ENCODE measurements at regions of chr16 and their contacts with region 1.

Region 1: GRCh38 chr16:361872-362701 is 8.3 kb downstream of the MRPL28 start:
- DNase-seq: peak; percentile 67 to 89
- ATAC-seq: peak; percentile 89 to 98 (median 95)
- H3K4me3 ChIP-seq: no peak overlapping the region
- H3K4me3 Mint-ChIP-seq: no peak overlapping the region
- H3K27ac ChIP-seq: no peak overlapping the region
- H3K27ac Mint-ChIP-seq: no peak overlapping the region
- H3K4me1 ChIP-seq: peaks cover 10% of the 10 kb centered on the region
- H3K4me1 Mint-ChIP-seq: peaks cover 5 to 7% of the 10 kb centered on the region in 2 donors
- H3K27me3 ChIP-seq: no peaks in the 10 kb centered on the region
- H3K27me3 Mint-ChIP-seq: no peaks in the 10 kb centered on the region
- CTCF ChIP-seq: peak; percentile 70

Region 2: DNA sequence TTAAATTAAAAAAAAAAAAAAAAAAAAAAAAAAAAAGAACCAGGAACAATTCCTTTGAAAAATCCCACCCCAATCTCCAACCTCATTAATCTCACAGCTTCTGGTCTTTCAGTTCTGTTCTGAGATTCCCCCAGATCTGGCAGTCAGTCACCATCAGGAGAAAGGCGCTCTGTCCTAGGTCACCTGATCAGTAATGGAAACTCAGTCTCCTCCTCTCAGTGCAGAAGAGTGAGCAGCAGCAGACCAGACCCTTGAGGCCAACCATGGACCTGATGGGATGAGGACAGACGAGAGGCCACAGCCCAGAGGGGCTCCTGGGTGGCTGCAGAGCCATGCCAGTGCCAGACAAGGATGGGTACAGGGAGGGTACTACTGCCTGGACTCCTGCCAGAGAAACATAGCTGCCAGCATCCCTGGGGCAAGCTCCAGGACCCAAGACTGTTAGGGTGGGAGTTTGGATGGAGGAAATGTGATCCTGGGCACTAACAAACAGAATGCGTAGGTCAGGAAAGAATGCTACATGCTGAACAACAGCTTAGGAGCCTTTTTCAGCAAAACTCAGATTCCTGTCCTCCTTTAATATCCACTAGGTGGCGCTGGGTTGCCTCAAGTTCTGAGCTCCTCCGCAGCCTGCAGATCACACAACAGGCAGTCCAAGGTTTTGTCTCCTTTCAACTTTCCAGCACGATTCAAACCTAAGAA is 255.3 kb before region 1 on chr16:
- intact Hi-C with region 1: loop called (anchors 1 kb)
- DNase-seq: peak; percentile 42 to 85
- ATAC-seq: peak; percentile 81 to 94 (median 86)
- H3K4me3 ChIP-seq: no peak overlapping the region
- H3K4me3 Mint-ChIP-seq: no peak overlapping the region
- H3K27ac ChIP-seq: no peak overlapping the region
- H3K27ac Mint-ChIP-seq: no peak overlapping the region
- H3K4me1 ChIP-seq: no peaks in the 10 kb centered on the region
- H3K4me1 Mint-ChIP-seq: peaks cover 0 to 7% of the 10 kb centered on the region in 2 donors
- H3K27me3 ChIP-seq: no peaks in the 10 kb centered on the region
- H3K27me3 Mint-ChIP-seq: no peaks in the 10 kb centered on the region
- CTCF ChIP-seq: peak; percentile 72

Region 3: DNA sequence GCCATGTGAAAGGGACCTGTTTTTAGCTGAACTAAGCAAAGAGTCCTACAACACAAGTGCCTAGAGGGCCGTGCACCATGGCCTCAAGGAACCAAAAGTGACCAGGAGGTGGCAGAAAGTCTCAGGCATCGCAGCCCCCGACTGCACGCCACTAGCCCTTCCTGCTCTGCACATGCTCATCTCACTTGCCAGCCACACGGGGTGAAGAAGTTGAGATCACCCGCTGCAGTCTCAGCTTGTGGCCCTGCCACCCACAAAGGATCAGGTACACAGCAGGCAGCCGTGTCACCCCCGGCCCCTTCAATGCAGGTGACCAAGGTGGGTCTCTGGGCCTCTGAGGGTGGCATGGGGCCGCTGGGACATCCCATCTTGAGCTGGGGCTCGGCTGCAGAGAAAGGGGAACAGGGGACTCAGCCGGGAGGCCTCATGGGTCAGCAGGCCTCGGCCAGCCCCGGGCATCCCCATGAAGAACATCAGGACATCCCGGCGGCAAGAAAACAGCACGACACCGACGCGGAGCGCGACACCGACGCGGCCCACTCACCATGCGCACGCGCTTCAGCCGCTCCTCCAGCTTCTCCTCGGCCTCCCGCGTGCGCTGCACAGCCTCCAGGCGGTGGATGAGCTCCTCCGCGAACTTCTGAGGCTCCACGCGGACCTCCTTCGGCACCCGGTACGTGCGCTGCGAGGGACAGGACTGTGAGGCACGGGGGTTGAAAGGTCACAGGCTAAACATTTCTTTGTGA is 58.2 kb before region 1 on chr16:
- intact Hi-C with region 1: loop called (anchors 1 kb)
- DNase-seq: peak in 1 of 2 donors; percentile 50
- ATAC-seq: peak in 2 of 3 donors; percentile 42 to 48
- H3K4me3 ChIP-seq: no peak overlapping the region
- H3K4me3 Mint-ChIP-seq: no peak overlapping the region
- H3K27ac ChIP-seq: no peak overlapping the region
- H3K27ac Mint-ChIP-seq: peak overlapping the region in 1 of 2 donors; percentile 48
- H3K4me1 ChIP-seq: peaks cover 40% of the 10 kb centered on the region
- H3K4me1 Mint-ChIP-seq: peaks cover 39 to 42% of the 10 kb centered on the region in 2 donors
- H3K27me3 ChIP-seq: no peaks in the 10 kb centered on the region
- H3K27me3 Mint-ChIP-seq: no peaks in the 10 kb centered on the region
- CTCF ChIP-seq: no peak

Measured in natural killer cell (primary cell).